Activated B cell treated with CpG ODN at 0.5 μM for 24 hours (primary cell): ENCODE measurements at regions of chr12 and their contacts with region 1.

Region 1: DNA sequence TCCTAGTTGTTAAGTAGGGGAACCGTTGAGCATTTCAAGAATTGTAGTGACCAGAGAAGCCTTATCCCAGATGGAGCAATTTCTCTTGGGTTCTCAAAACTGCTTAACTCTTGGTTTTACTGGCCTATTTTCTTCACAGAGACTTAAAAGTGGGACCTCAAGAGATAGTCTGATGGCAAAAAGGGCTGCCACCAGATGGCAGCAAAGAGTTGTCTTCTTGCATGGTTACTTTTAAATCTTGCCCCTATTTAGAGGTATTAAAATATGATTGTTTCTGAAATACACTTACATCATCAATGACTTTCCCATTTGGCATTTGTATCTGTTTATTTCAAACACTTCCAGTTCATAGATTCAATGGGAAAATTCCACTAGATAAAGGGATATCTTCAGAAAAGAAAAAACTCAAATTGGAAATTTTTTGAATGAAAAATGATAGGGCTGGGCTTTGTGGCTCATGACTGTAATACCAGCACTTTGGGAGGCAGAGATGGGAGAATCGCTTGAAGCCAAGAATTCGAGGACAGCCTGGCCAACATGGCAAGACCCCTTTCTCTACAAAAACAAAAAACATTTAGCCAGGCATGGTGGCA is 69.9 kb upstream of the CNTN1 start:
- DNase-seq: no peak
- ATAC-seq: no peak
- H3K4me3 Mint-ChIP-seq: no peak overlapping the region
- H3K27ac Mint-ChIP-seq: no peak overlapping the region
- H3K4me1 Mint-ChIP-seq: no peaks in the 10 kb centered on the region
- H3K27me3 Mint-ChIP-seq: no peaks in the 10 kb centered on the region
- CTCF ChIP-seq: no peak

Region 2: DNA sequence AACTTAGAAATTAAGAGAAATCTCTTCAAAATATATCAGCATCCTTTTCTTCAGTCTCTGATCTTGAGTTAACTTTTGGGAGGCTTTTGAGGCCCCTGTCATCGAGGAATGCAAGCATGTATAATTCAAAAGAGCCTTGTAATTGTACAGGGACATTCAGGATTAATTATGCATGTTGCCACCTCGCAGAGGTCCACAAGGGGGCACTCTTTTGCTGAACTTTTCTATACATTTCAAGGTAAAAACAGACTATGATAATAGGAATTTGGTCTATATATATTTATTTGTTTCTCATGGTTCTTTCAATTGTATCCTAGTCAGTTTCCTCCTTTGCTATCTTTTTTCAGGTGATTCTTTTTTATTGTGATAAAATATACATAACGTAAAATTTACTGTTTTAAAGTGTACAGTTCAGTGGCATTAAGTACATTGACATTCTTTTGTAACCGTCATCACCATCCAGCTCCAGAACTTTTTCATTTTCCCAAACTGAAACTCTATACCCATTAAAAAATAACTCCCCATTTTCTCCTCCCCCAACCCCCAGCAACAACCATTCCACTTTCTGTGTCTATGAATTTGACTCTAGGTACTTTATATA is 469.5 kb before region 1 on chr12:
- CTCF ChIA-PET with region 1: no interaction called
- POLR2A ChIA-PET with region 1: no interaction called
- intact Hi-C with region 1: loop called (anchors 5 kb)
- DNase-seq: peak; percentile 33
- ATAC-seq: peak; percentile 56
- H3K4me3 Mint-ChIP-seq: no peak overlapping the region
- H3K27ac Mint-ChIP-seq: peak overlapping the region; percentile 3
- H3K4me1 Mint-ChIP-seq: peaks cover 52% of the 10 kb centered on the region
- H3K27me3 Mint-ChIP-seq: no peaks in the 10 kb centered on the region
- CTCF ChIP-seq: peak; percentile 58

Region 3: GRCh38 chr12:40336573-40337199 is 285.7 kb before region 1 on chr12:
- CTCF ChIA-PET with region 1: no interaction called
- POLR2A ChIA-PET with region 1: no interaction called
- intact Hi-C with region 1: loop called (anchors 5 kb)
- DNase-seq: no peak
- ATAC-seq: peak; percentile 28
- H3K4me3 Mint-ChIP-seq: no peak overlapping the region
- H3K27ac Mint-ChIP-seq: no peak overlapping the region
- H3K4me1 Mint-ChIP-seq: no peaks in the 10 kb centered on the region
- H3K27me3 Mint-ChIP-seq: no peaks in the 10 kb centered on the region
- CTCF ChIP-seq: no peak